Activated CD4-positive, alpha-beta T cell treated with anti-CD3 and anti-CD28 coated beads, Interleukin-2, amount 10 ng/mL, durations not matched to agents 24 days and 14 days (primary cell): ENCODE measurements at regions of chr16 and their contacts with region 1.

Region 1: GRCh38 chr16:2267913-2268666 is at the start of gene RNPS1:
- DNase-seq: peak; percentile 99
- H3K4me3 Mint-ChIP-seq: peak within 1 kb of the TSS; percentile 94
- H3K27ac Mint-ChIP-seq: peak within 1 kb of the TSS; percentile 97
- H3K4me1 Mint-ChIP-seq: peaks cover 27% of the 10 kb centered on the region
- H3K27me3 Mint-ChIP-seq: peaks cover 1% of the 10 kb centered on the region
- total RNA-seq, gene RNPS1: 399 and 416 TPM in 2 replicates

Region 2: DNA sequence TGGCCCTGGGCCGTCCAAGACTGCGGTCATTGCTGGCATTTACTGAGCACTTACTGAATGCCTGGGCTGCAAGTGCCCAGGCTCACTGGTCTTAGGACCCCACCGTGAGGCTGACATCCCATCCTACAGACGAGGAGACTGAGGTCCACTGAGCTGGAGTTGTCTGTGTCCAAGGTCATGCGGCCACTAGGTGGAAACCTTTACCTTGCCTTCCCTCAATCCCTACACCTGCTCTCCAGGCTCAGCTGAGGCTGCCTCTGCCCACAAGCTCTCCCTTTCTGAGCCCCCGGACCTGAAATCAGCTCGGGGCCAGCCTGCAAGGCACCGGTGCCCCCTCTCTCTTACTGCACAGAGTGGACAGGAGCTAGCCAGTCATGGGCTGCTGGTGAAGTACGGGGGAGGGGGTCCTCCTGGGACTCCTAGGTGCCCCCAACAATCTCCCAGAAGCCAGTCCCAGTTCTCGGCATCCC is 73.2 kb before region 1 on chr16:
- intact Hi-C with region 1: no loop called
- DNase-seq: peak; percentile 83
- H3K4me3 Mint-ChIP-seq: peak overlapping the region; percentile 42
- H3K27ac Mint-ChIP-seq: no peak overlapping the region
- H3K4me1 Mint-ChIP-seq: peaks cover 2% of the 10 kb centered on the region
- H3K27me3 Mint-ChIP-seq: peaks cover 34% of the 10 kb centered on the region

Region 3: DNA sequence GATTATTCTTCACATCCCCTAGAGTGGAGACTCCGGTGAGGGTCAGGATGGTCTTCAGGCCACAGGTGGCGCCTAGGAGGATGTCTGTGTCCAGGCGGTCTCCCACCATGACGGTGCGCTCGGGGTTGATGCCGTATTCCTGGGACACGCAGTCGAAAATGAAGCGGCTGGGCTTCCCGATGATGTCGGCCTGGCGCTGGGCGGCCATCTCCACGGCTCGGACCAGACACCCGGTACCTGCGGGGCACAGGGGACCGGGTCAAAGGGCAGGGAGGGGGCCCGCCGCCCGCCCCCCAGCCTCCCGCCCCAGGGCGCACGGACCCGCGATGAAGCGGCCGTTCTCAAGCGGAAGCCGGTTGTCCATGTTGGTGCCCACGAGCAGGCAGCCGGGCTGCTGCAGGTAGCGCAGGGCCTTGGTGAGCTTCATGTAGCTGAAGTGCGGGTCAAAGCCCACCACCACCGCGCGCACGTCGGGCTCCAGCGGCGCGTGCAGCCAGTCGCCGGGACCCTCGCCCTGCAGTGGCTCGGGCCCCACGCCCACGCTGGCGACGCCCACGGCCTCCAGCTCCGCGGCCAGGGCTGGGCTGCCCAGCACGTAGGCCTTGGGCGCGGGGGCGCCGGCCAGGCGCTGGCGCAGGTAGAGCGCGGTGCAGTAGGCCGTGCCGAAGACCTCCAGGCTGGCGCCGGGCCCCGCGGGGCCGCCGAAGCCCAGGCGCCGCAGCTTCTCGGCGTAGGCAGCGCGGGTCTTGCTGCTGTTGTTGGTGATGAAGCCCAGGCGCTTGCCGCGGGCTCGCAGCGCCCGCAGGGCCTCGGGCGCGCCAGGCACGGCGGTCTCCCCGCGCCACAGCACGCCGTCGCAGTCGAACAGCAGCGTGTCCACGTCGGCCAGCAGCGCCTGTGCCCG is 54.0 kb before region 1 on chr16:
- intact Hi-C with region 1: loop called (anchors 1 kb)
- DNase-seq: no peak
- H3K4me3 Mint-ChIP-seq: peak overlapping the region; percentile 86
- H3K27ac Mint-ChIP-seq: peak overlapping the region; percentile 58
- H3K4me1 Mint-ChIP-seq: peaks cover 17% of the 10 kb centered on the region
- H3K27me3 Mint-ChIP-seq: no peaks in the 10 kb centered on the region

Region 4: GRCh38 chr16:2251483-2252240 is 16.4 kb before region 1 on chr16 and contains the start of gene ECI1:
- intact Hi-C with region 1: loop called (anchors 2 kb)
- DNase-seq: peak; percentile 95
- H3K4me3 Mint-ChIP-seq: peak within 1 kb of the TSS; percentile 93
- H3K27ac Mint-ChIP-seq: peak within 1 kb of the TSS; percentile 90
- H3K4me1 Mint-ChIP-seq: peaks cover 6% of the 10 kb centered on the region
- H3K27me3 Mint-ChIP-seq: no peaks in the 10 kb centered on the region
- total RNA-seq, gene ECI1: 34.1 and 38.7 TPM in 2 replicates